Endothelial cell of umbilical vein (primary cell): ENCODE measurements at regions of chr17 and their contacts with region 1.

Region 1: GRCh38 chr17:50094753-50095619 is at the start of gene PDK2:
- DNase-seq: peak; percentile 94
- H3K4me3 ChIP-seq: peak within 1 kb of the TSS; percentile 33 to 85 (median 46)
- H3K27ac ChIP-seq: no peak within 1 kb of the TSS
- H3K4me1 ChIP-seq: peaks cover 10% of the 10 kb centered on the region
- H3K27me3 ChIP-seq: no peaks in the 10 kb centered on the region
- CTCF ChIP-seq: no peak
- POLR2A ChIP-seq: no peak
- total RNA-seq, gene PDK2: 17.4 and 21.3 TPM in 2 replicates

Region 2: GRCh38 chr17:49815761-49816281 is 279.2 kb before region 1 on chr17:
- CTCF ChIA-PET with region 1: no interaction called
- POLR2A ChIA-PET with region 1: no interaction called
- dilution Hi-C with region 1: no loop called
- intact Hi-C with region 1: no loop called
- DNase-seq: peak; percentile 53
- H3K4me3 ChIP-seq: peak overlapping the region in 2 of 3 experiments; percentile 2 to 26
- H3K27ac ChIP-seq: peak overlapping the region; percentile 60
- H3K4me1 ChIP-seq: peaks cover 47% of the 10 kb centered on the region
- H3K27me3 ChIP-seq: no peaks in the 10 kb centered on the region
- CTCF ChIP-seq: no peak
- POLR2A ChIP-seq: no peak

Region 3: DNA sequence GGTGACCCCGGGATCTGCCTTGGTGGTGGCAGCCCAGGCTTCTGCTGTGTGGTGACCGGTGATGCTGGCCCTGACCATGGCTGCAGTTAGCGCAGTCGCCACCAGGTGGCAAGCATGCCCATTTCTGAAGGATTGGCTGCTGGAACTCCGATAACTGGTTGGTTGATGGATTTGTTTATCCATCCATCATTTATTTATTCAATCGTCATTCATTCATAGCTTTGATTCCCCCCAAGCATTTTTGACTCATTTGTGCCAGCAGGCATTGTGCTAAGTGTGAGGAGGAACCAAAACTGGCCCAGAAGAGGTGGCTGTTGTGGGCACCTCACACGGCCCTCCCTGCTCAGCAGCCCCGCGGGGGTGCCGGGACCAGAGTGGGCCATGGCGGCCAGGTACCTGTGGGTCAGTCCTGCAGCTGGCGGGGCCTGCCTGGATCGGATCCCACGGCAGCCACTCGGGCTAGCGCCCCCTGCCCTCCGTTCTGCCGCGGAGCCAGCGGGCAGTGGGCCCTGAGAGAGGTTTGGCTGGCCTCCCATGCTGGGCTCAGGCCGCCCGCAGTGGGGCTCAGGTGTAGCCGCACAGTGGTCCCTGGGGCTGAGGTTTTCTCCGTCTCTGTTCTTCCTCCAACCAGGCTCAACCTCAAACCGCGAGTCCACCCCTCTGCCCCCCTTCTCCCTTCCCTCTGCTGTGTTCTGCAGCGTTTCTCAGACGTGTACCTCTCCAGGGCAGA is 67.9 kb before region 1 on chr17:
- CTCF ChIA-PET with region 1: interaction called, 101 read pairs
- POLR2A ChIA-PET with region 1: no interaction called
- dilution Hi-C with region 1: no loop called
- intact Hi-C with region 1: loop called (anchors 2 kb)
- DNase-seq: peak; percentile 83
- H3K4me3 ChIP-seq: peak overlapping the region in 1 of 3 experiments; percentile 6
- H3K27ac ChIP-seq: peak overlapping the region; percentile 62
- H3K4me1 ChIP-seq: peaks cover 20% of the 10 kb centered on the region
- H3K27me3 ChIP-seq: no peaks in the 10 kb centered on the region
- CTCF ChIP-seq: peak; percentile 90 to 94
- POLR2A ChIP-seq: no peak

Region 4: GRCh38 chr17:50064258-50065001 is 30.6 kb before region 1 on chr17:
- CTCF ChIA-PET with region 1: interaction called, 24 read pairs
- POLR2A ChIA-PET with region 1: no interaction called
- dilution Hi-C with region 1: no loop called
- intact Hi-C with region 1: no loop called
- DNase-seq: peak; percentile 82
- H3K4me3 ChIP-seq: no peak overlapping the region
- H3K27ac ChIP-seq: peak overlapping the region; percentile 63
- H3K4me1 ChIP-seq: peaks cover 38% of the 10 kb centered on the region
- H3K27me3 ChIP-seq: no peaks in the 10 kb centered on the region
- CTCF ChIP-seq: no peak
- POLR2A ChIP-seq: no peak

Region 5: GRCh38 chr17:50114849-50115357 is 19.9 kb after region 1 on chr17:
- CTCF ChIA-PET with region 1: interaction called, 29 read pairs
- POLR2A ChIA-PET with region 1: no interaction called
- dilution Hi-C with region 1: no loop called
- intact Hi-C with region 1: no loop called
- DNase-seq: peak; percentile 68
- H3K4me3 ChIP-seq: no peak overlapping the region
- H3K27ac ChIP-seq: no peak overlapping the region
- H3K4me1 ChIP-seq: no peaks in the 10 kb centered on the region
- H3K27me3 ChIP-seq: no peaks in the 10 kb centered on the region
- CTCF ChIP-seq: peak; percentile 74 to 81
- POLR2A ChIP-seq: no peak

Region 6: DNA sequence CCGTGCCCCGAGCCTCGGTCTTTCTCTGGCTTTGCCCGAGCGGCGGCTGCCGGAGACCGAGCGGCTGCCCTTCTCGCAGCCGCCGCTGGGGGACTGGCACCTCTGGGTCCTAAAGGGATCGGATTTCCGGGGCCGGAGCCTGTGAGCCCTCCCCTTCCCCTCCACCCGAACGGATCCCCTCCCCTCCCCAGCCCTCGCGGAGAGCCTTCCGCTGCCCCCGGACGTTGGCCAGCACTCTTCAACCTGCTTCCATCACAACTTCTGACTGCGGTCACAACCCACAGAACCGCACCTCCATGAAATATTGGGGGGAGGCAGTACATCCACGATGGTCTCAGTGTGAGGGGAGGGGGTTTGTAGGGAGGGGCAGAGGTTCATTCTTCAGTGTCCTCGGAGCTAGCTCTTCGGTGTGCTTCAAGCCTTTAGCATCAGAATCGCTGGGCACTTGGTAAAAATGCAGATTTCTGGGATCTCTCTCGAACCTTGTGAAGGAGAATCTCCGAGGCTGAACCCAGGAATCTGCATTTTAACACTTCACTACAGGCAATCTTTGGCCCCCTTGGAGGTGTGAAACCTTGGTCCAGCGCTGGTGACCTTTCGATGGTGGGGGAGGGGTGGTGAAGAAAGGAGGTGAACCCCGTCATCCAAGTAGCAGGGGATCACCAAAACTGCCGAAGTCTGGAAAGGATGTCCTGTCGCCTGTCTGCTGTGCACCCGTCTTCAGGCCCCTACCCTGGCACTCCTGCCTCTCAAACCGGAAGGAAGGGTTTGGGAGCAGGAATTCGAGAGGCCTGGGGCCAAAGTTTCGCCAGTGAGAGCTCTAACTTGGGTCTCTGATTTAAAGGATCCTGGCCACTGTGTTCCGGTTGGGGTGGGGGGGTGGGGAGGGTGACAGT is 56.3 kb after region 1 on chr17:
- CTCF ChIA-PET with region 1: interaction called, 27 read pairs
- POLR2A ChIA-PET with region 1: no interaction called
- dilution Hi-C with region 1: no loop called
- intact Hi-C with region 1: loop called (anchors 1 kb)
- DNase-seq: peak; percentile 85
- H3K4me3 ChIP-seq: peak overlapping the region in 2 of 3 experiments; percentile 24 to 82
- H3K27ac ChIP-seq: peak overlapping the region; percentile 54
- H3K4me1 ChIP-seq: peaks cover 32% of the 10 kb centered on the region
- H3K27me3 ChIP-seq: no peaks in the 10 kb centered on the region
- CTCF ChIP-seq: peak; percentile 27 to 80
- POLR2A ChIP-seq: no peak

Region 7: GRCh38 chr17:50177983-50178834 is 83.2 kb after region 1 on chr17:
- CTCF ChIA-PET with region 1: interaction called, 21 read pairs
- POLR2A ChIA-PET with region 1: no interaction called
- dilution Hi-C with region 1: no loop called
- intact Hi-C with region 1: no loop called
- DNase-seq: peak; percentile 84
- H3K4me3 ChIP-seq: no peak overlapping the region
- H3K27ac ChIP-seq: peak overlapping the region; percentile 73
- H3K4me1 ChIP-seq: peaks cover 16% of the 10 kb centered on the region
- H3K27me3 ChIP-seq: no peaks in the 10 kb centered on the region
- CTCF ChIP-seq: peak; percentile 54 to 72
- POLR2A ChIP-seq: peak; percentile 71

Region 8: DNA sequence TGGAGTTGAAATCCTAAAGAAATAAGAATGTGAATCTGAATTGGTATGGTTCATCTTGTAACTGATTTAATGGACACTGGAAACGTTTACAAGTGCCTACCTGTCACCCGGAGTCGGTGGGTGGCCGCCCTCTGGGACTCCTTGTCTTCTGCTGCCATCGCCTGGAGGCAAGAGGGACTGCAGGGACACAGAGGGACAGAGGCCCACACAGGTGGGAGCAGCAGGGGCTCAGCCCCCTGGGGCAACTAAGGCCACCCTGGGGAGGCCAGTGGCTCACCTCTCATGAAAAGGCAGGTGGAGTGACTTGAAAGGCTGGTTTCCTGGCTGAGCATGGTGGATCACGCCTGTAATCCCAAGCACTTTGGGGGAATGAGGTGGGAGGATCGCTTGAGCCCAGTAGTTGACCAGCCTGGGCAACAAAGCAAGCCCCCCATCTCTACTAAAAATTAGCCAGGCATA is 202.4 kb after region 1 on chr17:
- CTCF ChIA-PET with region 1: interaction called, 26 read pairs
- POLR2A ChIA-PET with region 1: no interaction called
- dilution Hi-C with region 1: no loop called
- intact Hi-C with region 1: loop called (anchors 1 kb)
- DNase-seq: peak; percentile 56
- H3K4me3 ChIP-seq: no peak overlapping the region
- H3K27ac ChIP-seq: no peak overlapping the region
- H3K4me1 ChIP-seq: no peaks in the 10 kb centered on the region
- H3K27me3 ChIP-seq: no peaks in the 10 kb centered on the region
- CTCF ChIP-seq: peak; percentile 88 to 91
- POLR2A ChIP-seq: no peak